ENCODE measurements at regions of chr10 and their contacts with region 1.

Region 1: GRCh38 chr10:122435212-122435827 is 19.1 kb upstream of the ARMS2 start:
- DNase-seq: peak in 7 of 9 donors; percentile 33 to 73 (median 62)
- ATAC-seq: peak; percentile 70
- H3K4me3 ChIP-seq: no peak overlapping the region
- H3K4me3 Mint-ChIP-seq: no peak overlapping the region
- H3K27ac ChIP-seq: no peak overlapping the region
- H3K27ac Mint-ChIP-seq: peak overlapping the region in 5 of 9 donors; percentile 32 to 81 (median 53)
- H3K4me1 ChIP-seq: no peaks in the 10 kb centered on the region
- H3K4me1 Mint-ChIP-seq: peaks cover 0 to 14% (median 8%) of the 10 kb centered on the region in 7 donors
- H3K27me3 ChIP-seq: no peaks in the 10 kb centered on the region
- H3K27me3 Mint-ChIP-seq: no peaks in the 10 kb centered on the region

Region 2: DNA sequence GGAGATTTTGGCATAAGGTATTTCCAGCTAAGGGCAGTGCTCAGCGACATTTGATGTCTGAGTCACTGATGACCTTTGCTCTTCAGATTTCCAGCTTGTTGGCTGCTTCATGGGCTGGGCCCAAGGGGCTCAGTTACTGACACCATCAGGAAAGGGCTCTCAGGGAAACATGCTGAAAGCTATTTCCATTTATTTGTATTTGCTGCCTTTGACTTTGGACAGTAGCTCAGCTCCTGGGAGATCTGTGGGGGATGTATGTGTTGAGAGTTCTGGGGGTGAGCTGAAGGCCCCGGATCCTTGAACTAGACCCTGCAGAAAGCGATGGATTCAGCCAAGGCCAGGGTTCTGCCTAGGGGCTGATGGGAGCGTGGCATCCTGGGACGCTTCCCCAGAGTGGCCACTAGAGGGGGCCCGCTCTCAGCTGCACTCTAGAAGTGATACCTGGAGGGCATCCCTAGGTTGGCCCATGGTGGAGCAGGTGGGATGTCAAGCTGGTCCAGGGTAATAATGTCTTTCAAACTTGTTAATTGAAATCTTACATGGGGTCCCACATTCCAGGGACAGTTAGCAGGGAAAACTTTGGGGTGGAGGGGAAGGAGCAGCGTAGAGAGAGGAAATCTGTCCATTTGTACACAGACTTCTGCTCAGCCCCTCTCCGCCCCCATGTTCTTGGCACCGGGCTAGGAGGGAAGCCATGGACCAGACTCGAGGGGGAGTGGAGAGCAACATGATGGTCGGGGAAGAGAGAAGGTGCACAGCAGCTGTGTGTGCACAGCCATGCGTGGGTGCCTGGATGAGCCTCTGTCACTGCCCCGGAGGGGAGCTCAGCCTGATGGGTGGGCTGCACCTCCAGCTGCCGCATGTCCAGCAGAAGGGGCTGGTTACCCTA is 167.2 kb before region 1 on chr10:
- CTCF ChIA-PET with region 1: interaction called, 3 read pairs
- POLR2A ChIA-PET with region 1: no interaction called
- intact Hi-C with region 1: loop called (anchors 1 kb)
- DNase-seq: peak in 5 of 9 donors; percentile 15 to 52 (median 22)
- ATAC-seq: peak; percentile 78
- H3K4me3 ChIP-seq: no peak overlapping the region
- H3K4me3 Mint-ChIP-seq: no peak overlapping the region
- H3K27ac ChIP-seq: no peak overlapping the region
- H3K27ac Mint-ChIP-seq: no peak overlapping the region
- H3K4me1 ChIP-seq: no peaks in the 10 kb centered on the region
- H3K4me1 Mint-ChIP-seq: peaks cover 0 to 4% (median 0%) of the 10 kb centered on the region in 7 donors
- H3K27me3 ChIP-seq: no peaks in the 10 kb centered on the region
- H3K27me3 Mint-ChIP-seq: peaks cover 0 to 38% (median 33%) of the 10 kb centered on the region in 5 donors

Region 3: DNA sequence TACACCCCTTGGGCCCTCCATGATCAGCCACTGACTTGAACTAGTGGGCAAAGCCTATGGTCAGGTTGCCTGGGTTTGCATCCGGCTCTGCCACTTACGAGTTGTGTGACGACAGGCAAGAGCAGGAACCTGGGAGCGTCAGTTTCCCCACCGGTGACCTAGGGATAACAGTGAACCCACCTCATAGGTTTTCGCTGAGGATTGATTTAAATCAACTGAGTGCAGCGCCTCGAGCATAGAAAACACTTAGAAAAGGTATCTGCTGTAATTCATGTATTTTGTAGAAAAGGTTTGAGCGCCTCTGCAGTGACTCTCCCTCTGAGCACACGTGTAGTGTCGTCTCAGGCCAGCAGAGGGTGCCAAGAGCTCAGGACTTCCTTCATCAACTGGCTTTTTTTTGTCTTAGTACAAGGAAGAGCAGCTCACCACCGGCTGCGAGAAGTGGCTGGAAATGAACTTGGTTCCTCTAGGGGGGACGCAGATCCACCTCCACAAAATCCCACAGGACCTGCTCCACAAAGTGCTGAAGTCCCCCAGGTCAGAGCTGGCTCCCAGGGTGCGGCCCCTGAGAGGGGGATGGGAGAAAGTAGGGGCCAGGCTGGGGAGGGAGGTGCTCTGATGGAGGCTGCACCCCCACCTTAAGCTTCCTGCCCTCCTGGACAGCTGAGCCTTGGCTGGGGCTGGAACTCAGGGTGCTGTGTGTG is 136.6 kb before region 1 on chr10:
- CTCF ChIA-PET with region 1: interaction called, 14 read pairs
- POLR2A ChIA-PET with region 1: no interaction called
- intact Hi-C with region 1: loop called (anchors 1 kb)
- DNase-seq: peak; percentile 30 to 66 (median 53)
- ATAC-seq: peak; percentile 88
- H3K4me3 ChIP-seq: no peak overlapping the region
- H3K4me3 Mint-ChIP-seq: peak overlapping the region in 5 of 10 donors; percentile 27 to 63 (median 51)
- H3K27ac ChIP-seq: no peak overlapping the region
- H3K27ac Mint-ChIP-seq: no peak overlapping the region
- H3K4me1 ChIP-seq: no peaks in the 10 kb centered on the region
- H3K4me1 Mint-ChIP-seq: peaks cover 0 to 10% (median 8%) of the 10 kb centered on the region in 7 donors
- H3K27me3 ChIP-seq: no peaks in the 10 kb centered on the region
- H3K27me3 Mint-ChIP-seq: peaks cover 0 to 5% (median 0%) of the 10 kb centered on the region in 5 donors

Region 4: DNA sequence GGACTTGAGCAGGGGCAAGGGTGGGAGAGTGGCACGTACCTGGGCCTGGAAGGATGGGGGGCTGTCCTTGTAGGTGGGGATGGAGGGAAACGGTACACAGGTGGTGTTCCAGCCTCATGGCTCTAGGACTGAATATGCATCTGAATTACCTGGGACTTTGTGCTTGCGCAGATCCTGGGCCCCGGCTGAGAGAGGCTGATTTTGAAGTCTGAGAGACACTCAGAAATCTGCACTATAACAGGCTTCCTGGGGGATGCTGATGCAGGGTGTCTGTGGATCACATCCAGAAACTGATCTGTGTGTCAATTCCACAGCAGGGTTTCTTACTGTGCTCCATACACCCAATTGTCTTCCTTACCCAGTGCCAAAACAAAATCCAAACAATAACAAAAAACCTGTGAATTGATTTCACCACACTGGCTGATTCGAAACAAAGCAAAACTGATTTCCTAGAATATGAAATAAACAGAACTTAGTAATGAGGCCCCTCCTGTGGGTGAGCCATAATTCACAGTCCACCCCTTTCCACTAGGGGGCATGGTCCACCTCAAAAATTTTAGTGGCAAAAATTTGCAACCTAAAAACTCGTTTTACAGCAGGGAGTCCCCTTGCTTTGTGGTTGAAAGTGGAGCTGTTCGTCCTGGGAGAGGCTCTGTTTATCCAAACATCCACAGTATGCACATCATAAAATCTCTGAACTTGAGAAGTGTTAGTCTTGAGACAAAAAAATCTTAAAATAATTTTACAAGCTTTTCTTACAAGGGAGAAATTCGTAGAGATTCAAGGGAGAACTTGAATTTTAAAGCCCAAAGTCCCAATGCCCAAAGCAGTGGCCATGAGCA is 92.8 kb before region 1 on chr10:
- CTCF ChIA-PET with region 1: interaction called, 131 read pairs
- POLR2A ChIA-PET with region 1: interaction called, 5 read pairs
- intact Hi-C with region 1: loop called (anchors 1 kb)
- DNase-seq: peak in 8 of 9 donors; percentile 33 to 78 (median 66)
- ATAC-seq: peak; percentile 80
- H3K4me3 ChIP-seq: no peak overlapping the region
- H3K4me3 Mint-ChIP-seq: peak overlapping the region in 1 of 10 donors; percentile 57
- H3K27ac ChIP-seq: no peak overlapping the region
- H3K27ac Mint-ChIP-seq: peak overlapping the region in 4 of 9 donors; percentile 12 to 75 (median 42)
- H3K4me1 ChIP-seq: no peaks in the 10 kb centered on the region
- H3K4me1 Mint-ChIP-seq: peaks cover 0 to 8% (median 6%) of the 10 kb centered on the region in 7 donors
- H3K27me3 ChIP-seq: no peaks in the 10 kb centered on the region
- H3K27me3 Mint-ChIP-seq: peaks cover 0 to 7% (median 0%) of the 10 kb centered on the region in 5 donors

Region 5: GRCh38 chr10:122348512-122348911 is 86.8 kb before region 1 on chr10:
- CTCF ChIA-PET with region 1: interaction called, 131 read pairs
- POLR2A ChIA-PET with region 1: interaction called, 3 read pairs
- intact Hi-C with region 1: no loop called
- DNase-seq: no peak
- ATAC-seq: no peak
- H3K4me3 ChIP-seq: no peak overlapping the region
- H3K4me3 Mint-ChIP-seq: no peak overlapping the region
- H3K27ac ChIP-seq: no peak overlapping the region
- H3K27ac Mint-ChIP-seq: no peak overlapping the region
- H3K4me1 ChIP-seq: no peaks in the 10 kb centered on the region
- H3K4me1 Mint-ChIP-seq: peaks cover 0 to 3% (median 0%) of the 10 kb centered on the region in 7 donors
- H3K27me3 ChIP-seq: no peaks in the 10 kb centered on the region
- H3K27me3 Mint-ChIP-seq: peaks cover 0 to 5% (median 0%) of the 10 kb centered on the region in 5 donors

Region 6: GRCh38 chr10:122388287-122388997 is 46.9 kb before region 1 on chr10:
- CTCF ChIA-PET with region 1: interaction called, 12 read pairs
- POLR2A ChIA-PET with region 1: interaction called, 3 read pairs
- intact Hi-C with region 1: no loop called
- DNase-seq: no peak
- ATAC-seq: no peak
- H3K4me3 ChIP-seq: no peak overlapping the region
- H3K4me3 Mint-ChIP-seq: peak overlapping the region in 4 of 10 donors; percentile 36 to 65 (median 43)
- H3K27ac ChIP-seq: no peak overlapping the region
- H3K27ac Mint-ChIP-seq: peak overlapping the region in 4 of 9 donors; percentile 29 to 50 (median 34)
- H3K4me1 ChIP-seq: peaks cover 0 to 8% of the 10 kb centered on the region in 2 donors
- H3K4me1 Mint-ChIP-seq: peaks cover 0 to 92% (median 74%) of the 10 kb centered on the region in 7 donors
- H3K27me3 ChIP-seq: no peaks in the 10 kb centered on the region
- H3K27me3 Mint-ChIP-seq: peaks cover 0 to 26% (median 0%) of the 10 kb centered on the region in 5 donors

Region 7: DNA sequence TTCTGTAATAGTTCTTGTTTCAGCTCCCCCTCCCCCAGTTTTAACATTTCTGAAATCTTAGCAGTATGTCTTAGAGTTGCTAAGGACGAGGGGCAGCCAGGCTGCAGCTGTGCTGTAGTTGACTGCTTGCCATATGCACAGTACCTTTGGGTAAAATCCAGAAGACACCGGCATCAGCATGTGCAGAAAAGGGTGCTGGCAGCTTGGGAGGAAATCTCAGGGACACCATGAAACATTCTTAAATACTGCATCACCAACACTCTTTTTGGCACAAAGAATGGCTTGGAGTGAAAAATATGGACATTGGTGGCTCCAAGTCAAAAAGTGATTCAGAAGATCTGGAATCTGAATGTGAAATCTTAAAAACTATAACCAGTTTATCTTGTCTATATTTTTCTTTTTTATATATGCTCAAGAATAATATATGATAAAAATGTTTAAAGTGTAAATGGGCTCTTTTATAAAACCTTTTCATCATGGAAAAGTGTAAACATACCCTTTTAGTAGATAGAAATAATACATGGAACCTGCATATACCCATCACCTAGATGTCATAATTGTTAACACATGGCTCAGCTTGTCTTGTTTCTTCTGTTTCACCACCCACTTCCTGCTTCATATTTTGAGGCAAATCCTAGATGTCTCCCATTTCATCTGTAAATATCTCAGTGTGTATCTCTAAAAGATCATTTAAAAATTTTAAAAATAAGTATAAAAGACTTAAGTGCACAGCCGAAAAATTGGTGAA is 15.3 kb before region 1 on chr10:
- CTCF ChIA-PET with region 1: interaction called, 11 read pairs
- POLR2A ChIA-PET with region 1: interaction called, 4 read pairs
- intact Hi-C with region 1: loop called in 1 of 2 experiments (anchors 1 kb)
- DNase-seq: peak in 1 of 9 donors; percentile 8
- ATAC-seq: no peak
- H3K4me3 ChIP-seq: no peak overlapping the region
- H3K4me3 Mint-ChIP-seq: peak overlapping the region in 7 of 10 donors; percentile 25 to 74 (median 38)
- H3K27ac ChIP-seq: peak overlapping the region; percentile 54
- H3K27ac Mint-ChIP-seq: peak overlapping the region in 8 of 9 donors; percentile 56 to 94 (median 84)
- H3K4me1 ChIP-seq: peaks cover 67 to 75% of the 10 kb centered on the region in 2 donors
- H3K4me1 Mint-ChIP-seq: peaks cover 40 to 95% (median 83%) of the 10 kb centered on the region in 7 donors
- H3K27me3 ChIP-seq: no peaks in the 10 kb centered on the region
- H3K27me3 Mint-ChIP-seq: peaks cover 0 to 2% (median 0%) of the 10 kb centered on the region in 5 donors

Region 8: GRCh38 chr10:122475100-122475499 is 39.8 kb after region 1 on chr10:
- CTCF ChIA-PET with region 1: no interaction called
- POLR2A ChIA-PET with region 1: no interaction called
- intact Hi-C with region 1: no loop called
- DNase-seq: no peak
- ATAC-seq: no peak
- H3K4me3 ChIP-seq: no peak overlapping the region
- H3K4me3 Mint-ChIP-seq: no peak overlapping the region
- H3K27ac ChIP-seq: no peak overlapping the region
- H3K27ac Mint-ChIP-seq: no peak overlapping the region
- H3K4me1 ChIP-seq: no peaks in the 10 kb centered on the region
- H3K4me1 Mint-ChIP-seq: peaks cover 3 to 11% (median 8%) of the 10 kb centered on the region in 7 donors
- H3K27me3 ChIP-seq: no peaks in the 10 kb centered on the region
- H3K27me3 Mint-ChIP-seq: peaks cover 0 to 27% (median 23%) of the 10 kb centered on the region in 5 donors

Measured in naive thymus-derived CD4-positive, alpha-beta T cell (primary cell).